ENCODE measurements at regions of chr5 and their contacts with region 1.

Region 1: GRCh38 chr5:142713121-142713706 is 27.3 kb upstream of the FGF1 start:
- DNase-seq: peak; percentile 70 to 89
- ATAC-seq: peak; percentile 89 to 93
- H3K4me3 ChIP-seq: peak overlapping the region; percentile 49
- H3K27ac ChIP-seq: peak overlapping the region; percentile 82 to 92
- H3K4me1 ChIP-seq: peaks cover 5% of the 10 kb centered on the region; the same call in 2 of the 3 replicates
- CTCF ChIP-seq: peak; percentile 100
- EP300 ChIP-seq: no peak
- POLR2A ChIP-seq: no peak
- RAD21 ChIP-seq: peak; percentile 43 to 78

Region 2: GRCh38 chr5:141320225-141321169 is 1392.7 kb before region 1 on chr5 and contains the start of gene TAF7:
- CTCF ChIA-PET with region 1: no interaction called
- POLR2A ChIA-PET with region 1: no interaction called
- DNase-seq: peak; percentile 75 to 96
- ATAC-seq: peak; percentile 97 to 98
- H3K4me3 ChIP-seq: peak within 1 kb of the TSS; percentile 68
- H3K27ac ChIP-seq: peak within 1 kb of the TSS; percentile 84 to 93
- H3K4me1 ChIP-seq: no peaks in the 10 kb centered on the region
- CTCF ChIP-seq: peak; percentile 78
- EP300 ChIP-seq: no peak
- POLR2A ChIP-seq: peak; percentile 79
- RAD21 ChIP-seq: no peak; a peak in 1 of 5 replicates
- polyA plus RNA-seq, gene TAF7: 78.1 and 90.6 TPM in 2 replicates

Region 3: DNA sequence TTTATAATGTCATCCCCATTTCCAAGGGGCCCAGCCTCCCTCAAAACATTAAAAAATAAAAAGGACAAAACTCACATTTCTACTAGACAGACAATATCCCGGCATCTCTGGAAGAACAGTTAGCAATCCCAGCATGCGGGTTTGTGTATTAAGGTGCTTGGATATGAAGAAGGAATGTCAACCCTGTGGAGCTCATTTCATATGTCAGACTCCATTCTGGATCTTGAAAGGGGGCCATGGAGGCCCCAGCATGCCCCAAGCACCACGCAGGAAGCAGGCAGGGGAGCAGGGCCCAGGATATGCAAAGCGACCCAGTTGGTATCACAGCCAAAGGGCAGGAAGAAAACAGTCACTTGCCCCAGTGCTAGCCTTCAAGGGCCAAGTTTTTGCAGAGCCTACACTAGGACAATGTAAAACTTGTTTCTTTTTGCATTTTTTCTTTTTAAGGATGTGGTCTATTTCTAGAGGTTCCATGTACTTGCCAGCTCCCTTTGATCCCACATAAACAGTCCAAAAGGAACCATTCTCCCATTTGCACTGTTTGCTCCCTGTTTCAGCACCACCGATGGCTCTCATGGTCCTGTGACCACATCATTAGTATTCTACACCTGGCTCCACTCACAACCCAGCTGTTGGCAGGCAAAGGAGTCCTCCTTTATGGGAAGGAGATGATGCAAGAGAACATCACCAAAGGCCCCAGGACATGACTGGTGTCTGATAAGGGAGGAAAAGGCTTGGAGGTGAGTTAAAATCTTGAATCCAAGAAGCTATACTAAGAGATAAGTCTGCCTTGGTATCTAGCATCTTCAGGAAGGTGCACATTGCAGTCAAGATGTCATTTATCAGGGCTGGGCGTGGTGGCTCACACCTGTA is 85.6 kb before region 1 on chr5:
- CTCF ChIA-PET with region 1: interaction called, 17 read pairs
- POLR2A ChIA-PET with region 1: no interaction called
- DNase-seq: no peak
- ATAC-seq: no peak
- H3K4me3 ChIP-seq: no peak overlapping the region
- H3K27ac ChIP-seq: no peak overlapping the region
- H3K4me1 ChIP-seq: no peaks in the 10 kb centered on the region
- CTCF ChIP-seq: no peak
- EP300 ChIP-seq: no peak
- POLR2A ChIP-seq: no peak
- RAD21 ChIP-seq: no peak

Region 4: GRCh38 chr5:142663246-142663645 is 50.0 kb before region 1 on chr5:
- CTCF ChIA-PET with region 1: interaction called, 104 read pairs
- POLR2A ChIA-PET with region 1: no interaction called
- DNase-seq: no peak
- ATAC-seq: no peak
- H3K4me3 ChIP-seq: no peak overlapping the region
- H3K27ac ChIP-seq: no peak overlapping the region
- H3K4me1 ChIP-seq: no peaks in the 10 kb centered on the region
- CTCF ChIP-seq: no peak
- EP300 ChIP-seq: no peak
- POLR2A ChIP-seq: no peak
- RAD21 ChIP-seq: no peak

Region 5: GRCh38 chr5:142699184-142699720 is 14.0 kb before region 1 on chr5:
- CTCF ChIA-PET with region 1: interaction called, 146 read pairs
- POLR2A ChIA-PET with region 1: interaction called, 3 read pairs
- DNase-seq: peak; percentile 76 to 78
- ATAC-seq: peak; percentile 96 to 98
- H3K4me3 ChIP-seq: no peak overlapping the region
- H3K27ac ChIP-seq: no peak overlapping the region
- H3K4me1 ChIP-seq: 0 out of 3 replicates have a peak, but pooled peaks cover 4% of the 10 kb centered on the region
- CTCF ChIP-seq: peak; percentile 97
- EP300 ChIP-seq: no peak
- POLR2A ChIP-seq: no peak
- RAD21 ChIP-seq: peak; percentile 99 to 100

Region 6: GRCh38 chr5:142834504-142835203 is 121.4 kb after region 1 on chr5:
- CTCF ChIA-PET with region 1: interaction called, 11 read pairs
- POLR2A ChIA-PET with region 1: no interaction called
- DNase-seq: no peak
- ATAC-seq: no peak; a peak in 2 of 6 replicates
- H3K4me3 ChIP-seq: no peak overlapping the region
- H3K27ac ChIP-seq: peak overlapping the region; percentile 1 to 67; a peak in 3 of 6 replicates
- H3K4me1 ChIP-seq: peaks cover 80% of the 10 kb centered on the region
- CTCF ChIP-seq: no peak
- EP300 ChIP-seq: no peak
- POLR2A ChIP-seq: no peak
- RAD21 ChIP-seq: no peak

Region 7: GRCh38 chr5:142906863-142907671 is 193.9 kb after region 1 on chr5:
- CTCF ChIA-PET with region 1: interaction called, 15 read pairs
- POLR2A ChIA-PET with region 1: no interaction called
- DNase-seq: no peak
- ATAC-seq: no peak
- H3K4me3 ChIP-seq: no peak overlapping the region
- H3K27ac ChIP-seq: no peak overlapping the region
- H3K4me1 ChIP-seq: no peaks in the 10 kb centered on the region
- CTCF ChIP-seq: no peak
- EP300 ChIP-seq: no peak
- POLR2A ChIP-seq: no peak
- RAD21 ChIP-seq: no peak

Region 8: DNA sequence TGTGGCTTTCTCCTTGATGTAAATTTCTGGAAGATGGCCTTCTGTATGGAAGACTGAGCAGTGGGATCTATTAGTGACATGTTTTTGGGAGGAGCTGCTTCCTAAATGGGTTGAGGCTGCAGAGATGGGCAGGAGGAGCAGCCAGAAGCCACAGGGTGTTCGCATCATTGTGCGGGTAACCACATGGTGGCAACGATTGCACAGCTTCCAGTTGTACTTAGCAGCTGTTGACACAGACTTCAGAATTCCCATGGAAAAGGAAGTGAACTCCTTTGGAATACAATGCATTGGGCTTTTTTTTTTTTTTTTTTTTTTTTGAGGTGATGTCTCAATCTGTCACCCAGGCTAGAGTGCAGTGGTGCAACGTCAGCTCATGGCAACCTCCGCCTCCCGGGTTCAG is 393.0 kb after region 1 on chr5:
- CTCF ChIA-PET with region 1: no interaction called
- POLR2A ChIA-PET with region 1: no interaction called
- DNase-seq: peak; percentile 40 to 89
- ATAC-seq: peak; percentile 93 to 99
- H3K4me3 ChIP-seq: no peak overlapping the region
- H3K27ac ChIP-seq: peak overlapping the region in 1 of 2 experiments; percentile 65; a peak in 3 of 6 replicates
- H3K4me1 ChIP-seq: peaks cover 44% of the 10 kb centered on the region
- CTCF ChIP-seq: peak; percentile 37; the same call in 2 of the 3 replicates
- EP300 ChIP-seq: no peak
- POLR2A ChIP-seq: no peak
- RAD21 ChIP-seq: peak; percentile 70 to 74

Region 9: DNA sequence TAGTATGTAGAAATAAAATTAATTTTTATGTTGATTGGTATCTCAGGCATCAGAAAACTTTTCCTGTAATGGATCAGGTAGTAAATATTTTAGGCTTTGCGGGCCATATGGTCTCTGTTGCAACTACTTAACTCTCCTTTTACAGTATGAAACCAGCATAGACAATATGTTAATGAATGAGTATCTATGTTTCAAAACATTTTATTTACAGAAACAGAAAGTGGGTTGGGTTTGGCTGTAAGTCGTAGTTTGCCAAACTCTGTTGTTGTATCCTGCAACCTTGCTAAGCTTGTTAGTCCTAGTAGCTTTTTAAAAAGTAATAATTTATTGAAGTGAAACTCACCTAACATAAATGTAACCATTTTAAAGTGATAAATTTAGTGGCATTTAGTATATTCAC is 558.2 kb after region 1 on chr5:
- CTCF ChIA-PET with region 1: no interaction called
- POLR2A ChIA-PET with region 1: no interaction called
- DNase-seq: no peak
- ATAC-seq: no peak
- H3K4me3 ChIP-seq: no peak overlapping the region
- H3K27ac ChIP-seq: no peak overlapping the region
- H3K4me1 ChIP-seq: peaks cover 13% of the 10 kb centered on the region
- CTCF ChIP-seq: no peak
- EP300 ChIP-seq: no peak
- POLR2A ChIP-seq: no peak
- RAD21 ChIP-seq: no peak

Measured in A549 (cell line).